Activated CD8-positive, alpha-beta T cell treated with anti-CD3 and anti-CD28 coated beads for 36 hours (primary cell): ENCODE measurements at regions of chr9 and their contacts with region 1.

Region 1: DNA sequence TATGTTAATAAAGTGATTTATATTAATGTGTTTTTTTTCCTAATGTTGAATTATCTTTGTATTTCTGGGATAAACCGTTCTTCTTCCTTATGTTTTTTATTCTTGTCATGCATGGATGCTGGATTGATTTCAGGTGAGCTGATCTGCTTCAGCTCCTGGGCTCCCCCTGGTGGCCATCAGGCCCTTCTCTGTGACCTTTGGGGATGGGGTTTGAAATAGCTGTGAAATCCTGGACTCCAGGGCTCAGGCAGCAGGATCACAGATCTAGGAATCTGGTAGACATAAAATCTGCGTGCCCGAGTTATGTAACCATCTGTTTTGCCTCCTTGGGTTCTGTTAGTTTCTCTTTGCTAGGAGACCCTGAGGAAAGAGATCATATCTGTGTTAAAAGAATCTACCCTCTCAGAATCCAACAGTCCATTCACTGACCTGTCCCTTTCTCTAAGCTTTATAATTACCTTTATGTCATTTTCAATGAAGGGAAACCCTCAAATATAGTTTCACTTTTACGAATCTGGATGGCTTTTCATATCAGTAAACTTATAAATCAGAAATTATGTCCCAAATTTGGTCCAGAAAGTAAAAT is 12.2 kb upstream of the OR13J1 start:
- DNase-seq: peak; percentile 89
- ATAC-seq: peak; percentile 73
- H3K4me3 Mint-ChIP-seq: no peak overlapping the region
- H3K27ac Mint-ChIP-seq: no peak overlapping the region
- H3K4me1 Mint-ChIP-seq: no peaks in the 10 kb centered on the region
- H3K27me3 Mint-ChIP-seq: peaks cover 10% of the 10 kb centered on the region
- CTCF ChIP-seq: peak; percentile 98

Region 2: GRCh38 chr9:35732122-35732799 is 150.1 kb before region 1 on chr9 and contains the starts of genes CREB3 and TLN1:
- CTCF ChIA-PET with region 1: interaction called, 10 read pairs
- POLR2A ChIA-PET with region 1: no interaction called
- intact Hi-C with region 1: no loop called
- DNase-seq: peak; percentile 98
- ATAC-seq: peak; percentile 86
- H3K4me3 Mint-ChIP-seq: no peak within 1 kb of the TSS
- H3K27ac Mint-ChIP-seq: peak within 1 kb of the TSS; percentile 96
- H3K4me1 Mint-ChIP-seq: peaks cover 23% of the 10 kb centered on the region
- H3K27me3 Mint-ChIP-seq: no peaks in the 10 kb centered on the region
- CTCF ChIP-seq: no peak
- total RNA-seq, gene CREB3: 22.3 to 22.4 TPM
- total RNA-seq, gene TLN1: 212 to 219 TPM

Region 3: GRCh38 chr9:35790385-35791296 is 91.7 kb before region 1 on chr9:
- CTCF ChIA-PET with region 1: interaction called, 66 read pairs
- POLR2A ChIA-PET with region 1: no interaction called
- intact Hi-C with region 1: loop called (anchors 2 kb)
- DNase-seq: peak; percentile 65
- ATAC-seq: peak; percentile 94
- H3K4me3 Mint-ChIP-seq: no peak overlapping the region
- H3K27ac Mint-ChIP-seq: no peak overlapping the region
- H3K4me1 Mint-ChIP-seq: peaks cover 8% of the 10 kb centered on the region
- H3K27me3 Mint-ChIP-seq: no peaks in the 10 kb centered on the region
- CTCF ChIP-seq: peak; percentile 80

Region 4: DNA sequence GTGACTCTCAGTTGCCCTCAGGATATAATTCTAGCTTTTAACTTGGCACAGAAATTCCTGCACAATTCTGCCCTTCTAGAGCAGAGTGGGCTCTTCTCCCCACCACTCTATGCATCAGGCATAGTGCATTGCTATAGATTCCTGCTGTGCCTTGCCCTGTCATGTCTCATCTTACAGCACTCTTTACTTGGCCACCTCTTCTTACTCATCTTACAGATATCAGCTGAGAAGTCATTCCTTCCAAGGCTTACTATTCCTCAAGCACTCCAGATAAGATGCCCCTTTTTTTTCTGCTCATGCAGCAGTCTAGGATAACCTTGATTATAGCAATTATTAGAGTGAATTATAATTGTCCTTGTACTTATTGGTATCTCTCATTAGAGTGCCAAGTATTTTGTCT is 59.4 kb before region 1 on chr9:
- CTCF ChIA-PET with region 1: interaction called, 54 read pairs
- POLR2A ChIA-PET with region 1: no interaction called
- intact Hi-C with region 1: loop called (anchors 2 kb)
- DNase-seq: no peak
- ATAC-seq: no peak
- H3K4me3 Mint-ChIP-seq: no peak overlapping the region
- H3K27ac Mint-ChIP-seq: no peak overlapping the region
- H3K4me1 Mint-ChIP-seq: peaks cover 4% of the 10 kb centered on the region
- H3K27me3 Mint-ChIP-seq: no peaks in the 10 kb centered on the region
- CTCF ChIP-seq: no peak

Region 5: DNA sequence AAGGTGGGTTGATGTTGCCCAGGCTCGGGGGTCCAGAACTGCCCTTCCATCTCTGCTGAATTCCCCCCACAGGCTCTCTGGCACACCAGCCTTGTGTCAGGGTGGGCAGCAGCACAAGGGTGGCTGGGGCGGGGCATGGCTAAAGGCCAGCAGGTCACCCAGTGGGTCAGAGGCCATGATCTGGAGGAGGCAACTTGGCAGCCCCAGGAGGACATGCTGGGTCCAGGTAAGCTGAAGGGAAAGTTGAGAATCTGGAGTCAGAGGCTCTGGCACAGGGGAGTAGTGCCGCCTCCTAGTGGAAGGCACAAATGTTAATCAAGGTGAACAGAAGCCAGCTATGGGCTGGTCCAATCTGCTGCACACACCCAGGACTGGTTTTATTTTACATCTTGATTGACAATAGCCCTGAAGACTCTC is 47.1 kb before region 1 on chr9:
- CTCF ChIA-PET with region 1: interaction called, 22 read pairs
- POLR2A ChIA-PET with region 1: no interaction called
- intact Hi-C with region 1: no loop called
- DNase-seq: no peak
- ATAC-seq: peak; percentile 56
- H3K4me3 Mint-ChIP-seq: no peak overlapping the region
- H3K27ac Mint-ChIP-seq: no peak overlapping the region
- H3K4me1 Mint-ChIP-seq: peaks cover 8% of the 10 kb centered on the region
- H3K27me3 Mint-ChIP-seq: no peaks in the 10 kb centered on the region
- CTCF ChIP-seq: no peak

Region 6: DNA sequence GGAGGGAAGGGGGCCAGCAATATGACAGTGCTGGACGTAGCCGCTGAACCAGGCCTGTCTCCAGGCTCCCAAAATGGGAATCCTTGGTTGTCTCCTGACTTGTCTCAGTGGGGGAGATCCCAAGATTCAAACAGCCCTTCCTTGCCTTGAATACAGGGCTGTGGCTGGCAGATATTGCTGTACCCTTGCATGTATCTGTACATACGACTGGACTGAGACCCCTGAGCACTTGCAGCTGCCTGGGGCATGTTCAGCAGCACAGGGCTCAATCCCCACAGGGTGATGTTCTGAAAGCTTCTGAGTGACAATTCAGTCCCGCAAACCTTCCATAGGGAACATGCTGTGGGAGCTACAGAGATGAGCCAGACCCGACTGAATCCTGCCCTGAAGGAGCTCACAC is 25.5 kb before region 1 on chr9:
- CTCF ChIA-PET with region 1: interaction called, 19 read pairs
- POLR2A ChIA-PET with region 1: interaction called, 4 read pairs
- intact Hi-C with region 1: no loop called
- DNase-seq: no peak
- ATAC-seq: no peak
- H3K4me3 Mint-ChIP-seq: no peak overlapping the region
- H3K27ac Mint-ChIP-seq: no peak overlapping the region
- H3K4me1 Mint-ChIP-seq: no peaks in the 10 kb centered on the region
- H3K27me3 Mint-ChIP-seq: peaks cover 3% of the 10 kb centered on the region
- CTCF ChIP-seq: no peak

Region 7: GRCh38 chr9:35903049-35903448 is 20.7 kb after region 1 on chr9:
- CTCF ChIA-PET with region 1: interaction called, 12 read pairs
- POLR2A ChIA-PET with region 1: no interaction called
- intact Hi-C with region 1: no loop called
- DNase-seq: peak; percentile 35
- ATAC-seq: peak; percentile 67
- H3K4me3 Mint-ChIP-seq: no peak overlapping the region
- H3K27ac Mint-ChIP-seq: no peak overlapping the region
- H3K4me1 Mint-ChIP-seq: peaks cover 9% of the 10 kb centered on the region
- H3K27me3 Mint-ChIP-seq: peaks cover 3% of the 10 kb centered on the region
- CTCF ChIP-seq: peak; percentile 93